Activated naive CD4-positive, alpha-beta T cell treated with anti-CD3 and anti-CD28 coated beads, Interleukin-2, amount 10 ng/mL, durations not matched to agents 7 days and 5 days (primary cell): ENCODE measurements at regions of chr15 and their contacts with region 1.

Region 1: DNA sequence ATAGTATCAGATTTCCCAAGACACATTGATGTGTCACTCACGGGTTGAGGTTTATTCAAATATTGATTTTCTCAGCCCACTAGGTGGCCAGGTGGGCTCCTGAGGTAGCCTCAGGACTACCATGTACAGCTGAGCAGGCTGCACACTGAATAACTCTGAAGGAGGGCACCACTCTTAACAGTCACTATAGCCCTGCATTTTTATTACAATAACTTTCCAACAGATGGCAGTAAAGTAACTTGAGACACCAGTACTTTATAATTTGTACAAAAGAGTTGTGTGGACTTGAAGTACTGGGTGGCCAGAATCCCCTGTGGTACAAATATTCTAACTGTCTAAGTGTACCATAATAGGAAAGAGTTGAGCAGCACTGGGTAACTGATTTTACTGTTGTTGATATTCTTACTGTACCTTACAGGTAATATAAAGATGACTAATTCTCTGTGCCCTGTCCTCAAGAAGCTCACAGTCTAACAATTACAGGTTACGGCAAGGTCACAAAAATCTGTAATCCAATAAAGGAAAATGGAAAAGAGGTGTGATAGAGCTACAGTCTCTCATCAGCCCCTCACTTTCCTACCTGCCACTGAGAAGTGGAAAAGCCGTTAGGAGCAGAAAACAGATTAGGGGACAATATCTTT is 76.0 kb downstream of the ETFA start:
- DNase-seq: no peak
- H3K4me3 Mint-ChIP-seq: no peak overlapping the region
- H3K27ac Mint-ChIP-seq: no peak overlapping the region
- H3K4me1 Mint-ChIP-seq: no peaks in the 10 kb centered on the region
- H3K27me3 Mint-ChIP-seq: no peaks in the 10 kb centered on the region

Region 2: GRCh38 chr15:76285239-76285825 is 50.0 kb after region 1 on chr15:
- CTCF ChIA-PET with region 1: interaction called, 10 read pairs
- DNase-seq: no peak
- H3K4me3 Mint-ChIP-seq: no peak overlapping the region
- H3K27ac Mint-ChIP-seq: no peak overlapping the region
- H3K4me1 Mint-ChIP-seq: peaks cover 23% of the 10 kb centered on the region
- H3K27me3 Mint-ChIP-seq: no peaks in the 10 kb centered on the region

Region 3: GRCh38 chr15:76330080-76330680 is 94.9 kb after region 1 on chr15:
- CTCF ChIA-PET with region 1: interaction called, 19 read pairs
- DNase-seq: no peak
- H3K4me3 Mint-ChIP-seq: no peak overlapping the region
- H3K27ac Mint-ChIP-seq: no peak overlapping the region
- H3K4me1 Mint-ChIP-seq: peaks cover 10% of the 10 kb centered on the region
- H3K27me3 Mint-ChIP-seq: peaks cover 75% of the 10 kb centered on the region

Region 4: DNA sequence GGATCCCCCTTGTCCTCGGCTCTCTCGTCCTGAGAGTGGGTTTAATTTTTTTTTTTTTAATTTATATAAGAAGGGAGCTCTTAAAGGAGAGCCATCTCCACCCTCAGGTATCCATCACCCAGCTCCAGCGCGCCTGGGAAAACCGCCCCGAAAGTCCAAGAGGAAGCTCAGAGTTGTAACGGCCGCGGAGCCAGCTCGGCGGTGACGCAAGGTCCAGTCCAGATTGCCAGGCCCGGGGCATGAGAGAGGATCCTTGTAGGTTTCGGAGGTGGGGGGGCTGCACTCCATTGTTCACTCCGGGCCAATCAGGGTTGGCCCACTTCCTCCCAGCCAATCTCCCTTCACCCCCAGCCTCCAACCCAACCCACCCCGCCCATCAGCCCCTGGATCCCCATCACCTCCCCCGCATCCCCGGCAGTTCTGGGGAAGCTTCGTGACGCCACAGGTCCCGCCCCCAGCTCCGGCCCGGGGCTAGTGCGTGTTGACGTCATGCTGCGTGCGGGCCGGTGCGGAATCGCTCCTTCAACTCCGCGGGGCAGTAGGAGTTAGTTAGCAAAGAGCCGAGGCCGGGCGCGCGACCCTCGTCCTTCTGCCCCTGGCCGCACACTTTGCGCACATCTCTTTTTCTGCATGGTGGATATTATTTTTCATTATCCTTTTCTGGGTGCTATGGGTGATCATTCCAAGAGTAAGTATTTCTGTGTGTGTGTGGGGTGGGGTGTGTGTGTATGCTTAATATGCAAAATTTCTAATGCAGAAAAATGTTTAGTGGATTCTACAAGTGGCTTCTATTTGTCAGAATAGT is 101.2 kb after region 1 on chr15 and contains the start of gene ISL2:
- CTCF ChIA-PET with region 1: interaction called, 19 read pairs
- DNase-seq: peak; percentile 79
- H3K4me3 Mint-ChIP-seq: peak within 1 kb of the TSS; percentile 77
- H3K27ac Mint-ChIP-seq: peak within 1 kb of the TSS; percentile 67
- H3K4me1 Mint-ChIP-seq: peaks cover 62% of the 10 kb centered on the region
- H3K27me3 Mint-ChIP-seq: peaks cover 93% of the 10 kb centered on the region

Region 5: GRCh38 chr15:76756381-76756780 is 521.1 kb after region 1 on chr15:
- CTCF ChIA-PET with region 1: no interaction called
- DNase-seq: no peak
- H3K4me3 Mint-ChIP-seq: no peak overlapping the region
- H3K27ac Mint-ChIP-seq: no peak overlapping the region
- H3K4me1 Mint-ChIP-seq: no peaks in the 10 kb centered on the region
- H3K27me3 Mint-ChIP-seq: no peaks in the 10 kb centered on the region